ENCODE measurements at regions of chr11 and their contacts with region 1.

Region 1: GRCh38 chr11:57345555-57346211 is 7.5 kb downstream of the P2RX3 start:
- DNase-seq: no peak

Region 2: DNA sequence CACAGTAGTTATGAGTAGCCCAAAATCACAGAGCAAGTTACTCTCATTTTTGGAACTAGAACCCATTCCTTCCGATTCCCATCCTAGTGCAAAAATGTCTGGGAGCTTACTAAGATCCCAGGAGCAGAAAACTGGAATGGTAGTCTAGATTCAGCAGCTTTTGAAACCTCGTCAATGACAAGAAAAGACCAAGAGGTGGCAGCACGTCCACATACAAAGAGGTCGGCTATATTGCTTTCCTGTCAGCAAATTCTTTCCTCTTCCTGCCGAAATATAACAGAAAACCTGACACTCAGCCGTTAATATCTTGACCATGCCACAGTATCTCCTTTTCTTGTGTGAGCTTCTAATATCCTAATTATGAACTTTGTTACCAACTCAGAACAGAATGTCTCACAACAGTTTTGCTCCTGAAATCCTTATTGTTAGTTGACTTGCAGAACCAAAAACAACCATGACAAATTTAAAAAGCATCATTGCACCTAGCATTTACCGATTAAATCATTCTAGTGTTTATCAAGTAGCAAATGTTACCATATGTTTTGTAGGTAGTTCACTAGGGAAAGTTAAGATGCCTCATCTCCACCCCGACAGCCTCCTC is 504.4 kb before region 1 on chr11:
- intact Hi-C with region 1: loop called (anchors 10 kb)
- DNase-seq: no peak

Region 3: GRCh38 chr11:57288771-57289579 is 56.7 kb before region 1 on chr11:
- intact Hi-C with region 1: no loop called
- DNase-seq: no peak

Region 4: DNA sequence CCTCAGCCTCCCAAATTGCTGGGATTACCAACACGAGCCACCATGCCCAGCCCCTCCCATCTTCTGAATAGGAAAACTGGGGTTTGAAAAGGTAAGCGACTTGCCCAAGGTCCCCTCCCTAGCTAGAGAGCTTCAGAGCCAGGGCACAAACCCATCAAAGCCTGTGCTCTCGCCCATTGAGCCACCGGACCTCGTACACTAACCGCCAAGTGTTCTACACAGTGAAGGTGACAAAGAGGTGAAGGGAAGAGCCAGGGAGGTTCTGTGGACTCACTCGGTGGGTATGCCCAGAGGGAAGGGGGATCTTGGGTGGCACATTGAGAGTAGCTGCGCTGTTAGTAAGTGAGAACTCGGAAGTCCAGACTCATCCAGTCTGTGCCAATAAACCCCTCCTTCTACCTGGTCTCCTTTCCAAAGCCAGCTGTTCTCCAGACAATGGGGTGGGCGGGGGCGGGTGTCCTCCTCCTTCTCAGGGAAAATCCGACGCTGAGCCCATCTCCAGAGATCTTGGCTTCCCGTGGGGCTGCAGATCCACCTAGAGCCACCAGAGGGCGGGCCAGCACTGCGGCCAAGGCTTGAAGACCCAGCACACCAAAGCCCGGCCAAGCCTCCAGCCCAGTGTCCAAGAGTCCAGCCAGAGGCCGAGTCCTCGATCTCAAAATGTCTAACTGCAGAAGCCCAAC is 111.4 kb after region 1 on chr11:
- intact Hi-C with region 1: loop called (anchors 10 kb)
- DNase-seq: peak; percentile 94

Region 5: DNA sequence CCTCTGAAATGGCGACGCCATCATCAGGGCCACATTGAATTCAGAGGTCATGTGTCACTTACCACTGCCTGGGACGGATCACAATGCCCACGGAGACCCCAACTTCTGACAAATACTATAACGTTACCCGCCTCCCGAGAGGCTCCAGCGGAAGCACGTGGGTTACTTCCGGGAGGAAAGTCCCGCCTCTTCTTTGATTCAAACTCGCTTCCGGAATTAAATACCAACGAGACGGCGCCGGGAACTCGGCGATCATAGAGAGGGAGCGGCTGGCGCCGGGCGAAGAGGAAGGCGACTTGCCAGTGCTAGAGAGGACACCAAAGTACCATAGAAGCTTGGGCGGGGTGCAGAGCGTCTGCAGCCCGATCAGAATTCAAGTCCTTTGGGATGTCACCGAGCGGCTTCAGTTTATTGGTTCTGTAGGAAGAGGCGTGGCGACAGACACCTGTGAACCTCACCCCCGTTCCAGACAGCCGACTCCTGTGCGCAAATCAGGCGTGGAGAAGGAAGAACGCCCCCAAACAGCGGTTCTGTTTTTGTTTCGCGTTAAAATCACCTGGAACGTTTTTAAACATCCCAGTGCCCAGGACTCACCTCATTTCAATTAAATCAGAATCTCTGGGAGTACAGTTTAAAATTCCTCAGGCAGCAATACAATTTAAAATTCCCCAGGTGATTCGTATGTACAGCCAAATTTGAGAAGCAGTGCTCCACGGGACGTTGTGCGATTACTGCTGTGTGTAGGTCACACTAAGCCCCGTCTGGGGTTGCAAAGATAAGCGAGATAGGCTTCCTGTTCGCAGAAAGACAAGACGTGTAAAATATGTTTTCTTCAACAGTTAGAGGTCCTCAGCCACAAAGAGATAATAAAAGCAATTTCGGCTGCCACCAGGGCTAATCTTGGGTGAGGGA is 185.2 kb after region 1 on chr11 and contains the start of gene TIMM10:
- intact Hi-C with region 1: loop called (anchors 5 kb)
- DNase-seq: peak; percentile 98
- total RNA-seq, gene TIMM10: 71.6 TPM

Region 6: GRCh38 chr11:58513747-58514367 is 1168.2 kb after region 1 on chr11:
- intact Hi-C with region 1: loop called (anchors 10 kb)
- DNase-seq: no peak

Measured in cardiac septum (tissue), 1 donor.